ENCODE measurements at regions of chr1 and their contacts with region 1.

Region 1: GRCh38 chr1:179121159-179121938 is 39.5 kb downstream of the TOR3A start:
- DNase-seq: peak; percentile 25
- ATAC-seq: peak; percentile 48
- H3K4me3 ChIP-seq: no peak overlapping the region
- H3K27ac ChIP-seq: no peak overlapping the region
- H3K4me1 ChIP-seq: no peaks in the 10 kb centered on the region
- H3K27me3 ChIP-seq: no peaks in the 10 kb centered on the region
- CTCF ChIP-seq: peak; percentile 62
- EP300 ChIP-seq: no peak
- POLR2A ChIP-seq: no peak
- RAD21 ChIP-seq: peak; percentile 55

Region 2: DNA sequence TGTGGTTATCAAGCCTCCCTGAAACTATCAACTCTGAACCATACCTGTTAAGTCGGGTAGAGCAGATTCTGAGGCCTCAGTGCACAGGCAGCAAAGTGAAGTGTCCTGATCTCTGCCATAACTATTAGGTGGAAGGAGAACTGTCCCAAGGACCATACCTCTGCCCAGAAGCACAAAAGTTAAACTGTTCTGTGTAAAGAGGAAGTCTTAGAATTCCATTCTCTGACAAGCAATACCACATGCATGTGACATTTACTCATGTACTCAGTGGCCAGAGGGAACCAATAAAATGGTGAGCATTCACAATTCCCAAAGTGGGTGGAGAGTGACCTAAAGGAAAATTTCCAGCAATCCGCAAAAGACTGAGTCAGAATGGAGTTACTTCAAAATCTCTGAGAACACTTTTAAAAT is 21.5 kb after region 1 on chr1:
- CTCF ChIA-PET with region 1: no interaction called
- POLR2A ChIA-PET with region 1: no interaction called
- in situ Hi-C with region 1: no loop called
- intact Hi-C with region 1: no loop called
- DNase-seq: peak; percentile 33
- ATAC-seq: no peak
- H3K4me3 ChIP-seq: no peak overlapping the region
- H3K27ac ChIP-seq: no peak overlapping the region
- H3K4me1 ChIP-seq: peaks cover 14% of the 10 kb centered on the region
- H3K27me3 ChIP-seq: no peaks in the 10 kb centered on the region
- CTCF ChIP-seq: no peak
- EP300 ChIP-seq: no peak
- POLR2A ChIP-seq: no peak
- RAD21 ChIP-seq: no peak

Region 3: DNA sequence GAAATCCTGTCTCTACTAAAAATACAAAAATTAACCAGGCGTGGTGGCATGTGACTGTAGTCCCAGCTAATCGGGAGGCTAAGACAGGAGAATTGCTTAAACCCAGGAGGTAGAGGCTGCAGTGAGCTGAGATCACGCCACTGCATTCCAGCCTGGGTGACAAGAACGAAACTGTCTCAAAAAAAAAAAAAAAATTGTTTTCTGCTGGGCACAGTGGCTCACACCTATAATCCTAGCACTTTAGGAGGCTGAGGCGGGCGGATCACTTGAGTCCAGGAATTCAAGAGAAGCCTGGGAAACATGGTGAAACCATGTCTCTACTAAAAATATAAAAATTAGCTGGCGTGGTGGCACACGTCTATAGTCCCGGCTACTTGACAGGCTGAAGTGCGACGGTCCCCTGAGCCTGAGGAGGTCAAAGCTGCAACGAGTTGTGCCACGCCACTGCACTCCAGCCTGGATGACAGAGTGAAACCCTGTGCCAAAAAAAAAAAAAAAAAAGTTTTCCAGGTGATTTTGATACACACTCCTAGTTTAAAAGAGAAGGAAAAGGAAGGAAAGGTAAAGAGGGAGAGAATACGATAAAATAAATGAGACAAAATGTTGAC is 76.4 kb after region 1 on chr1:
- CTCF ChIA-PET with region 1: interaction called, 30 read pairs
- POLR2A ChIA-PET with region 1: no interaction called
- in situ Hi-C with region 1: loop called (anchors 5 kb)
- intact Hi-C with region 1: loop called (anchors 1 kb)
- DNase-seq: no peak
- ATAC-seq: no peak
- H3K4me3 ChIP-seq: no peak overlapping the region
- H3K27ac ChIP-seq: no peak overlapping the region
- H3K4me1 ChIP-seq: peaks cover 13% of the 10 kb centered on the region
- H3K27me3 ChIP-seq: no peaks in the 10 kb centered on the region
- CTCF ChIP-seq: no peak
- EP300 ChIP-seq: no peak
- POLR2A ChIP-seq: no peak
- RAD21 ChIP-seq: no peak

Measured in HepG2 (cell line).